ENCODE measurements at regions of chr5 and their contacts with region 1.

Region 1: DNA sequence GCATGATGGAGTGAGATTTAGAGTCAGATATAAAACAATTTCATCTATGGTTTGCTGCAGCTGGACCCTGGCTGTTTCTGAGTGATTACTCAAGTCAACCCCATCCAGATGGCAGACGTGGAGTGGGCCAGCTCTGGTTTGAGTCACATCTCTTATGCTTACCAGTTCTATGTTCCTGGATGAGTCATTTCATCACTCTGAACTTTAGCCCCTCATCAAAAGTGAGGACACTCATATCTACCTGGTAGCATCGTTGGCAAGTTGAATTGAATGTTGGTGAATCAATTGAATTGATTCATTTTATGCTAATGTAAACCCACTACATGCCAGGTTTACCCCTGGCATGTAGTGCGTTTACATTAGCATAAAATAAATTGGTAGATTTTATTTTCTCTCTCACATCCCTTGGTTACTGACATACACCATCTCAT is 176.4 kb downstream of the FGF18 start:
- DNase-seq: no peak

Region 2: DNA sequence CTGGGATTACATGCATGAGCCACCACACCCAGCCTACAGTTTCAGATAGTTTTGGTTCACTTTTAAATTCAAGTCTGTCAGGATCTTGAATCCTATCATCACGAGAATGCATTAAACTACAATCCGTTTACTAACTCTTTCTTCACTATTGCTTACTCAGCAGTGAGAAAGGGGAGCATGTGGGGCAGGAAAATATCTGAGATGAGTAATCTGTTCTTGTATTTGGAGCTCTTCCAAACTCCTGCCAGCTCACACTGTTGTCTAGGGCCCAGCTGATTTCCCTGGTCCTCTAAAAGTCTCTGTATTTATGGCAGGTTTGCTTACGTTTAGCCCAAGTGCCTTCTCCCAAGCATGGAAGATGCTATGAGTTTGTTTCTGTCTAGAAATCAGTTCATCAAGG is 24.2 kb before region 1 on chr5:
- intact Hi-C with region 1: loop called (anchors 2 kb)
- DNase-seq: no peak

Region 3: GRCh38 chr5:171580502-171581265 is 15.1 kb before region 1 on chr5:
- intact Hi-C with region 1: loop called (anchors 1 kb)
- DNase-seq: no peak

Measured in cardiac septum (tissue), 1 donor.